Tibial artery (tissue), 4 donors: ENCODE measurements at regions of chr6 and their contacts with region 1.

Region 1: DNA sequence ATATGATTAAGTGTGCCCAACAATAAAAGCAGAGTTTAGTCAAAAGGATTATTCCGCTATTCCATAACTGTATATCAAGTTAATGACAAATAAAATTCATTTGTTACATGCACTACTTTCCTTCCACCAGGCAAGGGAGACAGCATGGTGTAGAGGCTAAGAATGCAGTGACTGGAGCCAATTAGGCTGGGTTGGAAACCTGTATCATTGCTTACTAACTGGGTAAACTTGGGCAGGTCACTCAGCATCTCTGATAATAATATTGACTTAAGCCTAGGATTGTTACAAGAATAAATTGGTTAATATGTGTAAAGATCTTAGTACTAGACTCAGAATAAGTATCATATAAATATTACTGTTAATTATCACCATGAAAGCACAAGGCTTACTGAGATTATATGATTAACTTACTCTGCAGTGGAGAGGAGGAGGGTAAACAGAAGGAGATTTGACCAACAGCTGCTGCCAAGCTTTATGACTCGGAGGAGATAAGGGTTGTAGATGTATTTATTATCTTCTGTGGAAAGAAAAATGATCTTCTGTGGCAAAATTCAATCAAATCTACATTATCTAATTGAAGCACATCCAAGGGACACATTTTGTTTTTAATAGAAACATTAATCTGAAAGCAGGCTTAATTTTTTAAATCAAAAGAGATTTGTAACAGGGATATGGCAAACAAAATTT is 1459.9 kb downstream of the GRIK2 start:
- DNase-seq: no peak
- H3K4me3 ChIP-seq: no peak overlapping the region
- H3K27ac ChIP-seq: no peak overlapping the region
- H3K4me1 ChIP-seq: no peaks in the 10 kb centered on the region
- H3K27me3 ChIP-seq: no peaks in the 10 kb centered on the region
- CTCF ChIP-seq: no peak

Region 2: GRCh38 chr6:102015431-102015830 is 838.0 kb before region 1 on chr6:
- intact Hi-C with region 1: loop called (anchors 5 kb)
- DNase-seq: peak in 1 of 2 donors; percentile 39
- H3K4me3 ChIP-seq: no peak overlapping the region
- H3K27ac ChIP-seq: no peak overlapping the region
- H3K4me1 ChIP-seq: no peaks in the 10 kb centered on the region
- H3K27me3 ChIP-seq: no peaks in the 10 kb centered on the region
- CTCF ChIP-seq: no peak

Region 3: DNA sequence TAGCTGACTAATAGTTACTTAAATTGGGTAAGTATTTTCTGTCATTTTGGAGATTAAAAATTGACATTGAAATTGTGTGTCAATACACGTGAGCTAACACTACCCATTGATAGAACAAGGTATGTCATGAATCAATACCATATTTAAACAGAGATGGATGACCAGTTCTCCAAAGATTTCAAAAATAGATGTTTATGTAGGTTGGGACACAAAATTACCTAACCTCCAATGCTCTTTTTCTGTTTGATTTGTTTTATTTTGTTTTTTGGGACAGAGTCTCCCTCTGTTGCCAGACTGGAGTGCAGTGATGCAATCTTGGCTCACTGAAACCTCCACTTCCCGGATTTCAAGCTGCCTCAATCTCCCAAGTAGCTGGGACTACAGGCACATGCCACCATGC is 31.8 kb after region 1 on chr6:
- intact Hi-C with region 1: no loop called
- DNase-seq: no peak
- H3K4me3 ChIP-seq: no peak overlapping the region
- H3K27ac ChIP-seq: no peak overlapping the region
- H3K4me1 ChIP-seq: no peaks in the 10 kb centered on the region
- H3K27me3 ChIP-seq: no peaks in the 10 kb centered on the region
- CTCF ChIP-seq: no peak

Region 4: DNA sequence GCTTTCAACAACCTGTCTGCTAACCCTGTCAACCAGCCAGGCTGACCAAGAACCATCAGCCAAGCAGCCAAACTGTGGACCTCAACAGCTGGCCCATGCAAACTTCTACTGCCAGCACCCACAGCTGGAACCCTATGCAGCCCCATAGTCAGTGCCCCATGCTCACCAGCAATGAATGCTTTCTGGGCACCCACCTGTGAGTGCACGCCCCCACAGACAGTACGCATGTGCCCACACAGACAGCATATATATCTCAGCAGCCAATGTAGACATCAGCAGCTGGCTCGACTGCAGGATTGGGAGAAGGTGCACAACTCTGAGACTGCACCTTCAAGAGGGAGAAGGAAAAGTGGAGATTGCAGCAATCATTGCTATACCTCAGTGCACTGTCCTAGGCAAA is 74.7 kb after region 1 on chr6:
- intact Hi-C with region 1: no loop called
- DNase-seq: no peak
- H3K4me3 ChIP-seq: no peak overlapping the region
- H3K27ac ChIP-seq: no peak overlapping the region
- H3K4me1 ChIP-seq: no peaks in the 10 kb centered on the region
- H3K27me3 ChIP-seq: no peaks in the 10 kb centered on the region
- CTCF ChIP-seq: no peak